ENCODE measurements at regions of chr17 and their contacts with region 1.

Region 1: GRCh38 chr17:59342681-59343131 is 11.3 kb downstream of the YPEL2 start:
- DNase-seq: peak; percentile 55
- H3K4me3 Mint-ChIP-seq: no peak overlapping the region
- H3K27ac Mint-ChIP-seq: peak overlapping the region; percentile 28
- H3K4me1 Mint-ChIP-seq: peaks cover 40% of the 10 kb centered on the region
- H3K27me3 Mint-ChIP-seq: no peaks in the 10 kb centered on the region

Region 2: GRCh38 chr17:59427425-59427921 is 84.8 kb after region 1 on chr17:
- CTCF ChIA-PET with region 1: interaction called, 14 read pairs
- intact Hi-C with region 1: no loop called
- DNase-seq: peak; percentile 83
- H3K4me3 Mint-ChIP-seq: no peak overlapping the region
- H3K27ac Mint-ChIP-seq: no peak overlapping the region
- H3K4me1 Mint-ChIP-seq: peaks cover 15% of the 10 kb centered on the region
- H3K27me3 Mint-ChIP-seq: no peaks in the 10 kb centered on the region

Region 3: GRCh38 chr17:59558039-59558438 is 215.3 kb after region 1 on chr17:
- CTCF ChIA-PET with region 1: no interaction called
- intact Hi-C with region 1: no loop called
- DNase-seq: no peak
- H3K4me3 Mint-ChIP-seq: no peak overlapping the region
- H3K27ac Mint-ChIP-seq: no peak overlapping the region
- H3K4me1 Mint-ChIP-seq: no peaks in the 10 kb centered on the region
- H3K27me3 Mint-ChIP-seq: peaks cover 2% of the 10 kb centered on the region

Measured in activated naive CD4-positive, alpha-beta T cell treated with anti-CD3 and anti-CD28 coated beads for 36 hours (primary cell).